Activated CD8-positive, alpha-beta T cell treated with anti-CD3 and anti-CD28 coated beads, Interleukin-2, amount 10 ng/mL, durations not matched to agents 7 days and 5 days (primary cell): ENCODE measurements at regions of chr9 and their contacts with region 1.

Region 1: DNA sequence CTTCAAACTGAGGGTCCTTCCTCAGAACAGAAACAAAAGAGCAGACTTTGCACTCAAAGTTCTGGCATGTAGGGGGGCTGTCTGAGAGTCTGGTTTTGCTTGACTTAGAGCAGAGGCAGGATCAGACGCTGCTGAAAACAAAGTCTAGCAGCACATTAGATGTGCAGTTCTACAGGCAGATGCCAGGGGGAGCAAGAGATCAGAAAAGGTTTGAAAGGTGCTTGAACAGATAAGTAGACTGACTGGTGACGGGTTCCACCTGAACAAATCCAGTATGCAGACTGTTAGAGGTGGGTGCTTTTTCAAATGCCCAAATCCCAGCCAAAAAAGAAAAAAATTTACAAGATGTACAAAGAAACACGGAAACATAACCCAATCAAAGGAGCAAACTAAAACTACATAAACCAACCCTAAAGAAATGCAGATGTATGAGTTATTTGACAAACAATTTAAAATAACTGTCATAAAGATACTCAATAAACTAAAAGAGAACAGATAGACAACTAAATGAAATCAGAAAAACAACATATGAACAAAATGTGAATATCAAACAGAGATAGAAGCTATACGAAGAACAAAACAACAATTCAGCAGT is 194.7 kb upstream of the FREM1 start:
- DNase-seq: peak; percentile 57
- ATAC-seq: peak; percentile 67
- H3K4me3 Mint-ChIP-seq: no peak overlapping the region
- H3K27ac Mint-ChIP-seq: no peak overlapping the region
- H3K4me1 Mint-ChIP-seq: no peaks in the 10 kb centered on the region
- H3K27me3 Mint-ChIP-seq: no peaks in the 10 kb centered on the region

Region 2: DNA sequence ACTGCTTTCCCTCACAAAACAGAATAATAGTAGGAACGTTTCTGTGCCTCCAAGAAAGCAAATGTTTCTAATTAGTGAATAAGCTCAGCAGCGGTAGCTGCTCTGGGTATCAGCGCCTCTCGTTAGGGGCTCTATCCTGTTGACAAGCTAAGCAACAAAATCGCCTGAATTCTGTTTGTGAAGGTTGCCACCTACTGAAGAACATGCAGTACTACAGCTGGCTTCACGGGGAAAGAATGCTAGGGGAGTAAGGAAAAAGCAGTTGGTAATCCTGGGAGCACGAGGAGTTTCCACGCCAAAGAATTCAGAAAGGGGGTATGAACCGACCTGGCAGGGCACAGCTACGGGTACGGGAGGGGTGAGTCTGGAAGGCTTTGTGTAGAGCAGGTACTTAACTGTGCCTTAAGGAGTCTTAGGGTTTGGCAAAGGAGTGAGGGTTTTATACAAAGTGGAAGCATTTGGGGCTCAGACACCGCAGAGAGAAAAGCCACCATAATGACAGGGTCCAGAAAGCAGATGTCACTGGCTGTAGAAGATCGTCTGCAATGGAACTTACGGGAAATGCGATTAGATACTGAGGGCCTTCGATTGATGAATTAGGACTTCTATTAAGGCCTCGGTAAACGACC is 30.4 kb after region 1 on chr9:
- CTCF ChIA-PET with region 1: interaction called, 89 read pairs
- POLR2A ChIA-PET with region 1: no interaction called
- DNase-seq: peak; percentile 58
- ATAC-seq: peak; percentile 75
- H3K4me3 Mint-ChIP-seq: no peak overlapping the region
- H3K27ac Mint-ChIP-seq: no peak overlapping the region
- H3K4me1 Mint-ChIP-seq: peaks cover 12% of the 10 kb centered on the region
- H3K27me3 Mint-ChIP-seq: peaks cover 2% of the 10 kb centered on the region

Region 3: DNA sequence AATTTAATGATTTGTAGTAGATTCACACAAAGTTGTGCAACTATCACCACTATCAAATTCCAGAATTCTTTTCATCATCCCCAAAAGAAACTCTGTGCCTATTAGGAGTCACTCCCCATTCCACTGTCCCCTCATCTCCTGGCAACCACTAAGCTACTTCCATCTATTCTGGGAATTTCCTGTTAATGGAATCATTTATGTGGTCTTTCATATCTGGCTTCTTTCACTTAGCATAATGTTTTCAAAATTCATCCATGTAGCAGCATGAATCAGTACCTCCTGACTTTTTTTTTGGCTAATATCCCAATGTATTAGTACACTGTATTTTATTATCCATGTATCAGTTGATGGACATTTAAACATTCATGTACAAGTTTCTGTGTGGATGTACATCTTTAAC is 44.5 kb after region 1 on chr9:
- CTCF ChIA-PET with region 1: no interaction called
- POLR2A ChIA-PET with region 1: no interaction called
- DNase-seq: no peak
- ATAC-seq: no peak
- H3K4me3 Mint-ChIP-seq: no peak overlapping the region
- H3K27ac Mint-ChIP-seq: no peak overlapping the region
- H3K4me1 Mint-ChIP-seq: no peaks in the 10 kb centered on the region
- H3K27me3 Mint-ChIP-seq: peaks cover 20% of the 10 kb centered on the region